Heart right ventricle (tissue), 16 donors: ENCODE measurements at regions of chr17 and their contacts with region 1.

Region 1: DNA sequence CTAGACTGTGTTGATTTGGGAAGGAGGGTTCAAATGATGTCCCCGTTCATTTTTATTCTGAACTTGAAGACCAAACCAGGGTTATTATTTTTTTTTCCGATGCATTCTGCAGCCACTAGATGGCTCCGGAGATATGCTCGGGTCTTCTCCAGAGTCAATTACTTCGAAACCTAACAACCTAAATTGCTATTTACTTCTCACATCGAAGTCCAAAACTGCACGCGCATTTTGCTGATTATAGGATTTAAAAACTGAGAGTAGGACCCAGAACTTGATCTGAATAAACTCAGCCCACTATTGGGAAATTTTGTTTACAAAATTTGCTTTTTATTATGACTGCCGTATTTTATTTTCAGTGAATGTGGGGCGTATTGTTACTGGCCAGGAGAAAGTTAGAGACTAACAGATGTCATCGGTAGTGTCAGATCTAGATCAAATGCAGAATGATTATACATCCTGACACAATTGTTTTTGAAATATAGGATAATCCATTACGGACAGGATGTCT is 263.8 kb downstream of the HS3ST3A1 start:
- DNase-seq: peak in 1 of 2 donors; percentile 29
- ATAC-seq: peak in 4 of 8 donors; percentile 47 to 67 (median 58)
- H3K4me3 ChIP-seq: peak overlapping the region in 8 of 10 donors; percentile 6 to 49 (median 40)
- H3K27ac ChIP-seq: no peak overlapping the region
- H3K4me1 ChIP-seq: peaks cover 0 to 6% (median 0%) of the 10 kb centered on the region in 9 donors
- H3K27me3 ChIP-seq: peaks cover 0 to 28% (median 0%) of the 10 kb centered on the region in 7 donors
- CTCF ChIP-seq: peak; percentile 47 to 82 (median 70)

Region 2: DNA sequence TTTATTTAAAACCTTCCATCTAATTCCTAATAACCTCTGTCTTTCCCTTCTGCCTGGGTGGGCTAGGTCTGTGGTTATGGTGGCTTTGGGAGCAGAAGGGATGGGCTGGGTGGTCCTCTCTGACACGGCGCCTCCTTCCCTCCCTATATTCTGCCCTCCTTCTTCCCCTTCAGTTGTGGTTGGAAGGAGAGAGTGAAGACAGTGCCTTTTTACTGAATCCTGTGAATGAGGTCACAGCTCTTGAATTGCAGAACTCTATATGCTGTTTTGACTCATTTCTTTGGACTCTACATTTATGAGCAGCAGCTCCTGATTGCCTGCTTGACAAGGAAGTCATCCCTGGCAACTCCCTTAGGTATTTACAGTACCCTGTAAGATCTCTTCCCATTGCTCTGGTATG is 64.1 kb before region 1 on chr17:
- intact Hi-C with region 1: no loop called
- DNase-seq: no peak
- ATAC-seq: no peak
- H3K4me3 ChIP-seq: no peak overlapping the region
- H3K27ac ChIP-seq: no peak overlapping the region
- H3K4me1 ChIP-seq: no peaks in the 10 kb centered on the region
- H3K27me3 ChIP-seq: peaks cover 0 to 9% (median 0%) of the 10 kb centered on the region in 7 donors
- CTCF ChIP-seq: no peak

Region 3: DNA sequence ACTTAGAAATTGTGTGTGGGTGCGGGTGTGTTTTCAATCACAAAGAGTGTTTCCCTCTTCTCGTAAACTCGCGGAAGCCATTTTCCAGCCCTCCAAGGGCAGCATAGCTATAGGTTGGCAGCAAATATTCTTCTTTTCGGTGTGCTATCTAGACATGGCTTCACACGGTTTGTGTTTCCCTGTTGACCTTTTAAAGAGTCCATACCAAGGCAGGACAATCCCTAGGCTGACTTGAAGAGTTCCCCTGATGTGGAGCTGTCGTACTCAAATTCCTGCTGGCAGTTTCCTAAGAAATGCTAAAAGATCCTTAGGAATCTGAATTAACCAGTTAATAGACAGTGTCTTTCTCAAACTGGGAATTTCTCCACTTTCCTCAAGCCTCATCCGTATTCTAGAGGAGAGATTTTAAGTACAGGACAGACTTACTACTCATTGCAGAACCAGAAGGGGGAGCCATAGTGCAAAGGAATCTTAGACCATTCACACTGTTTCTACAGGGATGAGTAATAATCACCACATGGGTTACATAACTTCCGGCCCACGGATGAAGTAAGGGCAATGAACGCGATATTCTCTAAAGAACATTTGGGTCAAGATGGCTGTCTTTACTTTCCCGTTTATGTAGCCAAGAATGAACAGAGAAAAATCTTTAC is 31.5 kb before region 1 on chr17:
- intact Hi-C with region 1: no loop called
- DNase-seq: peak in 1 of 2 donors; percentile 25
- ATAC-seq: peak in 1 of 8 donors; percentile 50
- H3K4me3 ChIP-seq: no peak overlapping the region
- H3K27ac ChIP-seq: no peak overlapping the region
- H3K4me1 ChIP-seq: no peaks in the 10 kb centered on the region
- H3K27me3 ChIP-seq: peaks cover 0 to 8% (median 0%) of the 10 kb centered on the region in 7 donors
- CTCF ChIP-seq: peak in 8 of 9 donors; percentile 15 to 61 (median 40)

Region 4: GRCh38 chr17:13544292-13544691 is 206.4 kb after region 1 on chr17:
- intact Hi-C with region 1: loop called in 1 of 10 experiments (anchors 10 kb)
- DNase-seq: no peak
- ATAC-seq: peak in 1 of 8 donors; percentile 31
- H3K4me3 ChIP-seq: no peak overlapping the region
- H3K27ac ChIP-seq: no peak overlapping the region
- H3K4me1 ChIP-seq: peaks cover 0 to 14% (median 6%) of the 10 kb centered on the region in 9 donors
- H3K27me3 ChIP-seq: no peaks in the 10 kb centered on the region
- CTCF ChIP-seq: no peak

Region 5: GRCh38 chr17:13562271-13562800 is 224.4 kb after region 1 on chr17:
- intact Hi-C with region 1: loop called in 1 of 10 experiments (anchors 10 kb)
- DNase-seq: no peak
- ATAC-seq: peak in 5 of 8 donors; percentile 42 to 88 (median 75)
- H3K4me3 ChIP-seq: no peak overlapping the region
- H3K27ac ChIP-seq: no peak overlapping the region
- H3K4me1 ChIP-seq: no peaks in the 10 kb centered on the region
- H3K27me3 ChIP-seq: no peaks in the 10 kb centered on the region
- CTCF ChIP-seq: no peak